ENCODE measurements at regions of chr6 and their contacts with region 1.

Region 1: DNA sequence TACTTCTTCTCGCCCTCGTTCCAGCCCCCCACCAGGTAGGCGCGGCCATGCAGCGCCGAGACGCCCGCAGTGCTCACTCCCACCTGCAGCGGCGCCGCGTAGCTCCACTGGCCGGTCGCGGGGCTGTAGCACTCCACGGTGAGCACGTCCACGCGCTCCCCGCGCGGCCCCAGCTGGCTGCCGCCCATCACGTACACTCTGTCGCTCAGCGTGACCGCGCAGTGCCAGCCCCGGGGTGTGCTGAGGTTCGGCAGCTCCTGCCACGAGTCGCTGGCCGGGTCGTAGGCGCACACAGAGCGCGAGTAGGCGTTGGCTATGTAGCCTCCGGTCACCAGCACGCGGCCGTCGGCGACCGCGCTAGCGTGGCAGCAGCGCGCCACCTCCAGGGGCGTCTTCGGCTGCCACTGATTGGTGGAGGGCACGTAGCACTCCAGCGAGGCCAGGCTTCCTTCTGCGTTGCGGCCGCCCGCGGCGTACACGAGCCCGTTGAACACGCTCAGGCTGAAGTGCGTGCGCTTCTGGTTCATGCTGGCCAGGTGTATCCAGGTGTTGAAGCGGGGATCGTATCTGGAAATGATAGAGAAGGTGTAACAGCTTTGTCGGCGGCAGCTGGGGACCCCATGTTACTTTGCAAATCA is 13.7 kb downstream of the KLHL31 start:
- H3K4me3 Mint-ChIP-seq: peak overlapping the region; percentile 90
- H3K27ac Mint-ChIP-seq: peak overlapping the region; percentile 91
- H3K4me1 Mint-ChIP-seq: peaks cover 25% of the 10 kb centered on the region
- H3K27me3 Mint-ChIP-seq: peaks cover 12% of the 10 kb centered on the region

Region 2: GRCh38 chr6:53492860-53493634 is 158.8 kb before region 1 on chr6:
- intact Hi-C with region 1: loop called (anchors 1 kb)
- H3K4me3 Mint-ChIP-seq: no peak overlapping the region
- H3K27ac Mint-ChIP-seq: no peak overlapping the region
- H3K4me1 Mint-ChIP-seq: no peaks in the 10 kb centered on the region
- H3K27me3 Mint-ChIP-seq: peaks cover 15% of the 10 kb centered on the region

Region 3: DNA sequence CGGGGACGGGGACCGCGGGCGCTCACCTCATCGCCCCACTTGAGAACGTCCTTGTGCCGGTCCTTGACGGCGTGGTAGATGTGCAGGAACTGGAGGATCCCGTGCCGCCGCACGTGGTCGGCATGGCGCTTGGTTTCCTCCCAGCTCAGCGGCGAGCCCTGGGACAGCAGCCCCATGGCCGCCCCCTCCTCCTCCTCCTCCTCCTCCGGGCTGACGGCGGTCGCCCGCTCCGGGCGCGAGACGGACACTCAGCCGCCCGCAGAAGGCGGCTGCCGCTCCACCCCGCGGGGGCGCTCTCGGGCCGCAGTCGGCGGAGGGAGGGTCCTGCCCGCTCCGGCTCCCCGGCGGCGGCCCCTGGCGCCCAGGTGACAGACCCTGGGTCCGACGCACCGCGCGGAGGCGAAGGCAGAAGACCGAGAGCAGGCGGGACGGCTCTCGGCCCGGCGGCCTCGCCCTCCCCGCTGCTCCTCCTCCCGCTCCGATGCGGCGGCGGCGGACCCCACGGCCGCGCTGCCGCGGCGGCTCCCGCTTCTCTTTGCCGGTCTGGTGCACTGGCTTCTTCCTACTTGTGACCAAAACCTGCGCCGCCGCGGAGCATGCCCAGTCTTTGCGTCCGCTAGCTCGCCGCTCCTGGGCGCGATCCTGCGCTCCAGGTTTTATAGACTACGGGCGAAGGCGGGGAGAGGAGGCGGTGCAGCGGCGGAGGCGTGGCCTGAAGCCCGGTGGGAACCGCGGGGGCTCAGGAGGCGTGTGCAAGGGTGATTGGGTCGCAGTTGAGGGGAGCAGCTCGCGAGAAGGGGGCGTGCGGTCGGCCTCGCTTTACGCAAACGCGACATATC is 107.2 kb before region 1 on chr6 and contains the start of gene GCLC:
- intact Hi-C with region 1: loop called (anchors 1 kb)
- H3K4me3 Mint-ChIP-seq: peak within 1 kb of the TSS; percentile 89
- H3K27ac Mint-ChIP-seq: peak within 1 kb of the TSS; percentile 81
- H3K4me1 Mint-ChIP-seq: peaks cover 72% of the 10 kb centered on the region
- H3K27me3 Mint-ChIP-seq: peaks cover 6% of the 10 kb centered on the region

Region 4: GRCh38 chr6:53593001-53593488 is 58.8 kb before region 1 on chr6:
- intact Hi-C with region 1: loop called (anchors 5 kb)
- H3K4me3 Mint-ChIP-seq: peak overlapping the region; percentile 23
- H3K27ac Mint-ChIP-seq: peak overlapping the region; percentile 65
- H3K4me1 Mint-ChIP-seq: peaks cover 27% of the 10 kb centered on the region
- H3K27me3 Mint-ChIP-seq: no peaks in the 10 kb centered on the region

Region 5: DNA sequence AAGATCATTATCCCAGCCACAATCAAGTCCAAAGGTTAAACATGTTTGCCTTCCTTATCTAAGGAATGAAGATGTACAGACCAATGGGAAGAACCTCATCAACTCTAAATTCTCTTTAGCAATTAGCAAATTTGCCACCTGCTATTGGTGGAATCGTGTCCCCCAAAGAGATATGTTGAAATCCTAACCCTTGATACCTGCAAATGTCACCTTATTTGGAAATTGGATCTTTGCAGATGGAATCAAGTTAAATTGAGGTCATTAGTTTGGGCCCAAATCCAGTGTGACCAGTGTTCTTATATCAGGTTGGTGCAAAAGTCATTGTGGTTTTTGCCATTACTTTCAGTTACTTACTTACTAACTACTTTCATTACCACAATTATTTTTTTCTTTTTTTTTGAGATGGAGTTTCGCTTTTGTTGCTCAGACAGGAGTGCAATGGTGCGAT is 17.7 kb before region 1 on chr6:
- intact Hi-C with region 1: no loop called
- H3K4me3 Mint-ChIP-seq: no peak overlapping the region
- H3K27ac Mint-ChIP-seq: no peak overlapping the region
- H3K4me1 Mint-ChIP-seq: peaks cover 21% of the 10 kb centered on the region
- H3K27me3 Mint-ChIP-seq: peaks cover 4% of the 10 kb centered on the region

Region 6: GRCh38 chr6:53725791-53726431 is 74.0 kb after region 1 on chr6:
- intact Hi-C with region 1: loop called (anchors 5 kb)
- H3K4me3 Mint-ChIP-seq: no peak overlapping the region
- H3K27ac Mint-ChIP-seq: no peak overlapping the region
- H3K4me1 Mint-ChIP-seq: peaks cover 14% of the 10 kb centered on the region
- H3K27me3 Mint-ChIP-seq: peaks cover 15% of the 10 kb centered on the region

Measured in dendritic cell treated with granulocyte-macrophage colony-stimulating factor and Interleukin-4, amounts not matched to agents 40 ng/mL and 50 ng/mL, for 4 days (primary cell).